ENCODE measurements at regions of chr19 and their contacts with region 1.

Region 1: DNA sequence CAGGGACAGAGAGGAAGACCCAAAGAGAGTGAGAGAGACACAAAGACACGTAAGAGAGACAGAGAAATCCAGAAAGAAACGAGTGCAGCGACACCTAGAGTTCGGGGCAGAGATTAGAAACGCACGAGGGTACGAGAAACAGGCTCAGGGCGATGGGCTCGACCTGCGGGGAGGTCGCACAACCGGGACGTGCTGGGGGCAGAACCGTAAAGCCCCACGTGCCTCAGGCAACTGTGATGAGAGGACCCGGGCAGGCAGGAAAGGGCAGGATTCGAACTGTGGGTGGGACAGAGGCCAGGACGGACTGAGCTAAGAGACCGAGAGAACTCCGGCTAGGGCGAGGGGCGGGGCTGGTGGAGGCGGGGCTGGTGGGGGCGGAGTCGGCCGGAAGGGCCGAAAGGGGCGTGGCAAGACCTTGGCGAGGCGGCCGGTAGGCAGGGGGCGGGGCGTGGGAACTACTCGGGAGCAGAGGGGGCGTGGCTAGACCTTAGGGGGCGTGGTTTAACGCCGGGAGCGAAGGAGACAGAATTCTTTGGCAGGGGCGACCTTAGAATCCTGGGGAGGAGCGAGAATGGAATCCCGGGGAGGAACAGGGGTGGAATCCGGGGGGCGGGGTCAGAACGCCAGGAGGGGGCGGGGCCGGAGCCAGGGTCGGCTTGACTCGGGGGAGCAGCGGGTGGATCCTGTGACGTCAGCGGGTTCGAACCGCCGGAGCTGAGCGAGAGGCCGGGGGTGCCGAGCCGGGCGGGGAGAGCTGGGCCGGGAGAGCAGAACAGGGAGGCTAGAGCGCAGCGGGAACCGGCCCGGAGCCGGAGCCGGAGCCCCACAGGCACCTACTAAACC is at the start of gene NECTIN2:
- DNase-seq: peak; percentile 95
- H3K4me3 Mint-ChIP-seq: peak within 1 kb of the TSS; percentile 83
- H3K27ac Mint-ChIP-seq: no peak within 1 kb of the TSS
- H3K4me1 Mint-ChIP-seq: peaks cover 20% of the 10 kb centered on the region
- H3K27me3 Mint-ChIP-seq: peaks cover 18% of the 10 kb centered on the region
- total RNA-seq, gene NECTIN2: 0.88 to 1.1 TPM

Region 2: DNA sequence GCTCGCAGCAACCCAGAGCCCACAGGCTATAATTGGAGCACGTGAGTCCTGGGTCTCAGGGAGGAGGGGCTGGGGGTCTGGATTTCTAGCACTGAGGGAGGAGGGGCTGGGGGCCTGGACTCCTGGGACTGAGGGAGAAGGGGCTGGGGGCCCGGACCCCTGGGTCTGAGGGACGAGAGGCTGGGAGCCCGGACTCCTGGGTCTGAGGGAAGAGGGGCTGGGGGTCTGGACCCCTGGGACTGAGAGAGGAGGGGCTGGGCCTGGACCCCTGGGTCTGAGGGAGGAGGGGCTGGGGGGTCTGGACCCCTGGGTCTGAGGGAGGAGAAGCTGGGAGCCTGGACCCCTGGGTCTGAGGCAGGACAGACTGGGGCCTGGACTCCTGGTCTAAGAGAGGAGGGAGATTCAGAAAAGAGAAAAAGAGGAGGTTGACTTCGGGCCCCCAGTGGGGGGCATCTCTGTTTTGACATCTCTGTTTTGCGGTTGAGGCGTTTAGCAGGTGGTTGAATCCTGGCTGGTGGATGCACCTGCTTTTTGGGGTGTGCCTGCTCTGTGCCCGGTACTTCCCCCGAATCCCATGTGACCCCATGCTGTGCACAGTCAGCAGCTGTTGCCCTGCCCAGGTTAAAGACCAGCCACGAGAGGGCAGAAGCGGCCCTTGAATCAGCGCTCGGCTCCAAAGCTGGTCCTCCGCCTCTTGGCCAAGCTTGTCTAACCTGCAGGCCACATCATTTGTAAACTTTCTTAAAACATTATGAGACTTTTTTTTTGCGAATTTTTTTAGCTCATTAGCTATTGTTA is 191.7 kb before region 1 on chr19:
- CTCF ChIA-PET with region 1: interaction called, 7 read pairs
- intact Hi-C with region 1: loop called (anchors 10 kb)
- DNase-seq: peak; percentile 91
- H3K4me3 Mint-ChIP-seq: no peak overlapping the region
- H3K27ac Mint-ChIP-seq: no peak overlapping the region
- H3K4me1 Mint-ChIP-seq: peaks cover 7% of the 10 kb centered on the region
- H3K27me3 Mint-ChIP-seq: peaks cover 2% of the 10 kb centered on the region

Region 3: DNA sequence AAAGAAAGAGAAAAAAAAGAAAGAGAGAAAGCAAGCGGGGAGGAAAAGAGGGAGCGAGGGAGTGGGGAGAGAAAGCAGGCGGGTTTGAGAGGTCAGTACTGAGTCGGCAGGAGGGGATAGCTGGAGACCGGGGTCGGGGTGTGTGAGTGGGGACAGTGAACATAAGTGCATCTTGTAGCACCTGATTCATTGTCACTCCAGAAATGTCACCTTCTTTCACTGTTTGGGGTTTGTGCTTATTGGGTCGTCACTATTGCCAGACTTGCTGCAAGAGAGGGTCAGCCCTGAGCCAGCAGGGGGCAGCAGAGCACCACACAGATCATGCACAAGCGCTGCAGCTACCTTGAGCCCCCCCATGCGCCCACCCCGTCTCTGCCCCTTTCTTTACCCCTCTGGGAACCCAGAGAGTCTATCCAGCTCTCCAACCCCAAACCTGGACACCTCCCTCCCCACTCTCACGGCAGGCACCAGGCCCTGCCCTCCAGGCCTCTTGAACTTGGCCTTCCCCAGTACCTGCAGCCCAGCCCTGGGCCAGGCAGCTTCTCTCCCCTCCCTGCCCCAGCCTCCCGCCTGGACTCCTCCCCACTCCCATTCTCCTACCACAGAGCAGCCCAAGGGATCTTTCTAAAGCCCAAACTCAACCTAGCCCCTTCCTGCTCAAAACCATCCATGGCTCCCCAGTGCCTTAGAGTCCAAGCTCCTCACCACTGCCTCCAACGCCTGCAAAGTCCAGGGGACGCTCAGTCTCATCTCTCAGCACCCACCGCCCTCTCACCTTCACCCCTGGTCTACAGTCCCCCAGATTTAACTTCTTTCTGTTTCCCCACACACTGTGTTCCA is 156.6 kb before region 1 on chr19:
- CTCF ChIA-PET with region 1: interaction called, 5 read pairs
- intact Hi-C with region 1: loop called (anchors 1 kb)
- DNase-seq: peak; percentile 86
- H3K4me3 Mint-ChIP-seq: no peak overlapping the region
- H3K27ac Mint-ChIP-seq: no peak overlapping the region
- H3K4me1 Mint-ChIP-seq: peaks cover 42% of the 10 kb centered on the region
- H3K27me3 Mint-ChIP-seq: peaks cover 6% of the 10 kb centered on the region

Region 4: DNA sequence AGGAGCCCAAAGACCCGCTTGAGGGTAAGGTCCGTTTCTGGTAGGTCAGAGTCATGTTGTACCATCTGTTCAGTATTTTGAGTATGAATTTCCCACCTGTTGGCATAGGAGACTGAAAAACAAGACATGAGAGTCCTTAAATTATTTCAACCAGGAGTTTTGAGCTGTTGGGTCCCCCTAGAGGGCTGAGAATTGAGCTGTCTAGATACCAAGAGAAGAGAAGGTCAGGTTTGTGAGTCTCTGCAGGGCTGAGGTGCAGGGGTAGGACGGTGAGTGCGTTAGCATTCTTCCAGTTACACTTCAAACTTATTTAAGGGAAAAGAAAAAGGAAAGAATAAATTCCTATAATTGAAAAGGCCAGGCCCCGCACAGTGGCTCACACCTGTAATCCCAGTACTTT is 63.1 kb before region 1 on chr19:
- CTCF ChIA-PET with region 1: interaction called, 9 read pairs
- intact Hi-C with region 1: loop called (anchors 1 kb)
- DNase-seq: no peak
- H3K4me3 Mint-ChIP-seq: no peak overlapping the region
- H3K27ac Mint-ChIP-seq: no peak overlapping the region
- H3K4me1 Mint-ChIP-seq: peaks cover 4% of the 10 kb centered on the region
- H3K27me3 Mint-ChIP-seq: peaks cover 10% of the 10 kb centered on the region

Region 5: DNA sequence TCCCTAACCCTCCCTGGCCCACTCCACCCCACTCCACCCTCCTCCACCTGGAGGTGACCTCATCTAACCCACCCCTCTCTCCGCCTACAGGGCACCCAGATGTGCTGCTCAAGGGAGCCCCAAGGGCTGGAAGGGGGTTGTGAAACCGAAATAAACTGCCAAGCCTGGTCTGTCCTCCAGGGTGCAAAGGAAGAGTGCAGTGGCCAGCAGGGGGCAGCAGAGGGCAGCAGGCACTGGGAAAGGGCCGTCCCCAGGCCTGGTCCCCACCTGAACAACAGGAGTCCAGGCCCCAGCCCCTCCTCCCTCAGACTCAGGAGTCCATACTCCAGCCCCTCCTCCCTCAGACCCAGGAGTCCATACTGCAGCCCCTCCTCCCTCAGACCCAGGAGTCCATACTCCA is 45.4 kb before region 1 on chr19:
- CTCF ChIA-PET with region 1: interaction called, 13 read pairs
- intact Hi-C with region 1: loop called (anchors 1 kb)
- DNase-seq: peak; percentile 88
- H3K4me3 Mint-ChIP-seq: no peak overlapping the region
- H3K27ac Mint-ChIP-seq: no peak overlapping the region
- H3K4me1 Mint-ChIP-seq: peaks cover 17% of the 10 kb centered on the region
- H3K27me3 Mint-ChIP-seq: no peaks in the 10 kb centered on the region

Region 6: GRCh38 chr19:44954824-44955586 is 109.2 kb after region 1 on chr19 and contains the start of gene CLPTM1:
- CTCF ChIA-PET with region 1: interaction called, 4 read pairs
- intact Hi-C with region 1: loop called (anchors 2 kb)
- DNase-seq: peak; percentile 98
- H3K4me3 Mint-ChIP-seq: peak within 1 kb of the TSS; percentile 98
- H3K27ac Mint-ChIP-seq: peak within 1 kb of the TSS; percentile 98
- H3K4me1 Mint-ChIP-seq: peaks cover 48% of the 10 kb centered on the region
- H3K27me3 Mint-ChIP-seq: no peaks in the 10 kb centered on the region
- total RNA-seq, gene CLPTM1: 32.4 to 34.6 TPM

Region 7: DNA sequence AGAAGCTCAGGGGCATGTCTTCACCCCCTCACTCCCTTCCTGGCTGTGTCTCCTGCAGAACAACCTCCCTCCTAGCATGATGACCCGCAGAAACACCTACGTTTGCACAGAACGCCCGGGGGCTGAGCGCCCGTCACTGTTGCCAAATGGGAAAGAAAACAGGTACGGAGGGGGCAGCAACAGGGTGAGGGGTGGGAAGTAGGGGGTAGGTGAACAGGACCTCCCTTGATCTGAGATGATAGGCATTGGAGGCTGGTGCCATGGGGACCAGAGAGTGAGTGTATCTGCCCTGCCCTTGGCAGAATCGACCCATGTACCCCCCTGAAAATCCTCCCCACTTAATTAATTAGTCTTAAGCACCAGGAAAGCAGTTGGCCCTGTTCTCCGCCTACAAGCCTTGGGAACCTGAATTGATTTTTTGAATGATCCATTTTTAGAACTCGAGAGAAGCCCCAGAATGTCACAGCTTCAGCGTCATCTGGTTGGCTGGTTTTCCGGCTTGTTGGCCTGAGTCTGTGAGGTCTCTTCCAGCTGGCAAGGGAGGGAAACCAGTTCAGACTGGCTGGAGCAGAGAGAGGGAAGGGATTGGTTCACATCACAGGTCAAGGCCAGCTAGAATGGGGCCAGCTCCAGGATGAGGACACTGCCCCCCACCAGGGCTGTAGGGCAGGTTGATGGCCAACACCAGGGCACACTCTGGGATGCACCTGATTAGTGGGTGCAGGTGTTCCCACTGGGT is 448.6 kb after region 1 on chr19:
- CTCF ChIA-PET with region 1: no interaction called
- intact Hi-C with region 1: no loop called
- DNase-seq: no peak
- H3K4me3 Mint-ChIP-seq: no peak overlapping the region
- H3K27ac Mint-ChIP-seq: no peak overlapping the region
- H3K4me1 Mint-ChIP-seq: peaks cover 8% of the 10 kb centered on the region
- H3K27me3 Mint-ChIP-seq: no peaks in the 10 kb centered on the region

Measured in activated naive CD4-positive, alpha-beta T cell treated with anti-CD3 and anti-CD28 coated beads for 36 hours (primary cell).